HCT116 (cell line): ENCODE measurements at regions of chr13 and their contacts with region 1.

Region 1: GRCh38 chr13:20828539-20829364 is 55.0 kb upstream of the EEF1AKMT1 start:
- DNase-seq: peak; percentile 26
- ATAC-seq: peak; percentile 72
- H3K4me3 ChIP-seq: no peak overlapping the region; a peak in 1 of 4 replicates
- H3K27ac ChIP-seq: no peak overlapping the region
- H3K4me1 ChIP-seq: peaks cover 0 to 6% of the 10 kb centered on the region in 2 experiments; a peak in 1 of 4 replicates
- H3K27me3 ChIP-seq: no peaks in the 10 kb centered on the region
- CTCF ChIP-seq: peak; percentile 62 to 77 (median 76); a peak in 5 of 6 replicates
- POLR2A ChIP-seq: no peak
- RAD21 ChIP-seq: peak; percentile 60

Region 2: DNA sequence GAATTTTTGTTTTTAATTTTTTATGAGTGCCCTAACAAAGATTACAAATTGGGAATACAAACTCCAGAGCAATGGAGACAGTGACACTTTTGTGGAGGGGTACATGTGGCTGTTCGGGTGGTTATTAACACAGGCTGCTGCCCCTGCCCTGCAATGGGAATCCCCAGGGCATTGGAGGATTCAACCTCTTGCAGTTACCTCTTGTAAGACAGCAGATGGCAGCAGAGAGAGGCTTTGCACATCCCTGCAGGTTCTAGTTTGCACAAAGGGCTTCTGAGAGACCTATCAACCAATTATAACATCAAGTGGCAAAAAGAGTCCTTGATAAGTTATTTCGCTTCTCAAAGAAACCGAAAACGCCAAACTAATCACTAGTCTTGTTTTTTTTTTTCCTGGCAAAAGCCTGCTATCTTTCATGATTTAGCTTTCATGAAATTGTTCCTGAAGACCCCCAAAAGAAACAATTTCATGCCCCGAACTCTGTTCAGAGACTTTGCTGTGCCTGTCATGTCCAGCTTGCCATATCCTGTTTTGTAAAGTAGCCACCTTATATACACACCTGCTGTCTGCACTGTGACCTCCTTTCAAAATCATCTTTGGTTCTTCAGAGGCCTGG is 646.4 kb before region 1 on chr13:
- CTCF ChIA-PET with region 1: no interaction called
- POLR2A ChIA-PET with region 1: no interaction called
- RAD21 ChIA-PET with region 1: no interaction called
- intact Hi-C with region 1: loop called (anchors 5 kb)
- DNase-seq: peak; percentile 57
- ATAC-seq: peak; percentile 99
- H3K4me3 ChIP-seq: no peak overlapping the region
- H3K27ac ChIP-seq: no peak overlapping the region
- H3K4me1 ChIP-seq: peaks cover 0 to 3% of the 10 kb centered on the region in 2 experiments; a peak in 1 of 4 replicates
- H3K27me3 ChIP-seq: no peaks in the 10 kb centered on the region
- CTCF ChIP-seq: peak; percentile 65 to 83 (median 79); a peak in 5 of 6 replicates
- POLR2A ChIP-seq: no peak
- RAD21 ChIP-seq: peak; percentile 80

Region 3: GRCh38 chr13:20495082-20496023 is 333.4 kb before region 1 on chr13:
- CTCF ChIA-PET with region 1: interaction called, 28 read pairs
- POLR2A ChIA-PET with region 1: no interaction called
- RAD21 ChIA-PET with region 1: no interaction called
- intact Hi-C with region 1: loop called (anchors 1 kb)
- DNase-seq: peak; percentile 50
- ATAC-seq: peak; percentile 79
- H3K4me3 ChIP-seq: no peak overlapping the region
- H3K27ac ChIP-seq: 0 out of 2 replicates have a peak overlapping the region, but pooled peaks have one; percentile 7
- H3K4me1 ChIP-seq: peaks cover 0 to 5% of the 10 kb centered on the region in 2 experiments; a peak in 1 of 4 replicates
- H3K27me3 ChIP-seq: no peaks in the 10 kb centered on the region
- CTCF ChIP-seq: peak; percentile 71 to 98 (median 93); a peak in 5 of 6 replicates
- POLR2A ChIP-seq: no peak
- RAD21 ChIP-seq: peak; percentile 85

Region 4: DNA sequence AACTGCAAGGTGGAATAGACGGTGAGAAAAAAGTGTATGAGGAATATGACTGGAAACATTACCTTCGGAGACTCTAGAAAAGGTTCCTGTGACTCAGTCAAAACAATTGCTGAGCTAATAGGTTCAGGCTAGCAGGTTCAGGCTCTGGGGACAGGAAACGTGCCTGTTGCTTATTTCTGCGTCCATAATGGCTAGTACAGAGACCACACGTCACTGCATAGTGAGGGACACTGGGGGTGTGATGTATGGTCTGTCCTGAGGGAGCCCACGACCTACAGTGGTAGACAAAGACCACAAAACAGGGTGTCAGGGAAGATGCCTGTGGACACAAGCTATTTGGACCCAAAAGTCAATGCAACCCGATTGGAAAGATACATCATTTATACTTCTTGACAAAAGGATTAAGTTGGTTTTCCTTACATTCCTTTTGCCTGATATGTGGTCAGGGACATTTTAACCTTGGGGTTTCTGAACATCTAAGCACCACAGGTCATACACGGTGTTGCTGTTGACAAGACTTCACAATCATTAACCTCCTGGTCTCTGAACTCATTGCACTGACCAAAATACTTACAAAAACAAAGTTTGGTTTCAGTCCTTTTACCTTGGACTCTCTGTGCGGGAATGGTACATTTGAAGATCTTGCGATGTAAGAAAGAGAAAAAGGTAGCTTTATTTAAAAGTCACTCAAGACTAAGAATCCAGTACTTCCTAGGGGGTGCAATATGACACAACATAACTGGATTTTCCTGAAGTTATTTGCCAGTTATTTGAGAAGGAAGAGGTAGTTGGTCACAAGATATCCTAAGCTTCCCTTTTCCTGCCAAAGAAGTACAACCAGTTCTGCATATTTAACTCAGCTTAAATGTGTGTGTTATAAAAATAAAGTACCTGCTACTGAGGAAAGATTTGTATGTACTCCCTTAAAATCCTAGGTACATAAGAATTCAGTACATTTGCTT is 323.1 kb before region 1 on chr13:
- CTCF ChIA-PET with region 1: no interaction called
- POLR2A ChIA-PET with region 1: no interaction called
- RAD21 ChIA-PET with region 1: no interaction called
- intact Hi-C with region 1: no loop called
- DNase-seq: no peak
- ATAC-seq: no peak
- H3K4me3 ChIP-seq: no peak overlapping the region
- H3K27ac ChIP-seq: no peak overlapping the region
- H3K4me1 ChIP-seq: no peaks in the 10 kb centered on the region
- H3K27me3 ChIP-seq: no peaks in the 10 kb centered on the region
- CTCF ChIP-seq: no peak
- POLR2A ChIP-seq: no peak
- RAD21 ChIP-seq: no peak

Region 5: GRCh38 chr13:20713751-20714150 is 115.0 kb before region 1 on chr13:
- CTCF ChIA-PET with region 1: interaction called, 6 read pairs
- POLR2A ChIA-PET with region 1: no interaction called
- RAD21 ChIA-PET with region 1: no interaction called
- intact Hi-C with region 1: loop called (anchors 1 kb)
- DNase-seq: no peak
- ATAC-seq: no peak
- H3K4me3 ChIP-seq: no peak overlapping the region
- H3K27ac ChIP-seq: no peak overlapping the region
- H3K4me1 ChIP-seq: peaks cover 0 to 23% of the 10 kb centered on the region in 2 experiments; a peak in 3 of 4 replicates
- H3K27me3 ChIP-seq: no peaks in the 10 kb centered on the region
- CTCF ChIP-seq: no peak
- POLR2A ChIP-seq: no peak
- RAD21 ChIP-seq: no peak

Region 6: GRCh38 chr13:20814224-20814910 is 14.4 kb before region 1 on chr13:
- CTCF ChIA-PET with region 1: interaction called, 34 read pairs
- POLR2A ChIA-PET with region 1: no interaction called
- RAD21 ChIA-PET with region 1: no interaction called
- intact Hi-C with region 1: no loop called
- DNase-seq: no peak
- ATAC-seq: no peak
- H3K4me3 ChIP-seq: no peak overlapping the region
- H3K27ac ChIP-seq: no peak overlapping the region
- H3K4me1 ChIP-seq: peaks cover 0 to 5% of the 10 kb centered on the region in 2 experiments; a peak in 1 of 4 replicates
- H3K27me3 ChIP-seq: no peaks in the 10 kb centered on the region
- CTCF ChIP-seq: no peak
- POLR2A ChIP-seq: no peak
- RAD21 ChIP-seq: no peak

Region 7: GRCh38 chr13:20840568-20840967 is 11.8 kb after region 1 on chr13:
- CTCF ChIA-PET with region 1: interaction called, 19 read pairs
- POLR2A ChIA-PET with region 1: no interaction called
- RAD21 ChIA-PET with region 1: interaction called in 1 of 2 experiments, 3 read pairs
- intact Hi-C with region 1: no loop called
- DNase-seq: no peak
- ATAC-seq: no peak
- H3K4me3 ChIP-seq: no peak overlapping the region
- H3K27ac ChIP-seq: no peak overlapping the region
- H3K4me1 ChIP-seq: no peaks in the 10 kb centered on the region
- H3K27me3 ChIP-seq: no peaks in the 10 kb centered on the region
- CTCF ChIP-seq: no peak
- POLR2A ChIP-seq: no peak
- RAD21 ChIP-seq: no peak